ENCODE measurements at regions of chr4 and their contacts with region 1.

Region 1: GRCh38 chr4:154551872-154552686 is 1.9 kb upstream of the PLRG1 start:
- DNase-seq: peak; percentile 46
- H3K4me3 Mint-ChIP-seq: no peak overlapping the region
- H3K27ac Mint-ChIP-seq: no peak overlapping the region
- H3K4me1 Mint-ChIP-seq: peaks cover 20% of the 10 kb centered on the region
- H3K27me3 Mint-ChIP-seq: peaks cover under 1% of the 10 kb centered on the region

Region 2: DNA sequence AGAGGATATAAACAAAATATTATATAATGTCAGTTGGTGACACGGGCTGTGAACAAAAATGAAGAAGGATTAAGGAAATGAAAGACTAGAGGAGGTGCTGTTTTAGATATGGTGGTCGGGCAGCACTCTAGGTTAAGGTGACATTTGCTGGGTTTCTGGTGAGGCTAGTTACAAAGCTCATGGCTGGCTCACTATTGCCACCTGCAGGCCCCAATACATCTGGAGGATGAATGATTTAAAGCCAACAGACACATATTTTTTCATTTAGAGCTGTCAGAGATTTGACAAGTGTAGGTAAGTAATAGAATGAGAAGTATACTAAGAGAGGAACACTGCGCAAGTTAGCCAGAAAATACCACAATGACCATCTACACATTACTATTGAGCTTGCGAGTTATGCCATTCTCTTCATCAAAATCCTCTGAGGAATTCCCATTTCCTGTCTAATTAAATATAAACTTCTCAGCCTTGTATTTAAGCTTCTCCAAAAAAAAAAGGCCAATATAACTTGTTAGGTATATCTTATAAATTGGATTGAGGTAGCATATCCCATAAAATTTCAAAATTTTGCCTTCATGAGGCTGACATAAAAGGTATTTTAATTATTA is 66.7 kb after region 1 on chr4:
- intact Hi-C with region 1: loop called (anchors 1 kb)
- DNase-seq: peak; percentile 36
- H3K4me3 Mint-ChIP-seq: no peak overlapping the region
- H3K27ac Mint-ChIP-seq: no peak overlapping the region
- H3K4me1 Mint-ChIP-seq: peaks cover 8% of the 10 kb centered on the region
- H3K27me3 Mint-ChIP-seq: peaks cover 10% of the 10 kb centered on the region

Region 3: DNA sequence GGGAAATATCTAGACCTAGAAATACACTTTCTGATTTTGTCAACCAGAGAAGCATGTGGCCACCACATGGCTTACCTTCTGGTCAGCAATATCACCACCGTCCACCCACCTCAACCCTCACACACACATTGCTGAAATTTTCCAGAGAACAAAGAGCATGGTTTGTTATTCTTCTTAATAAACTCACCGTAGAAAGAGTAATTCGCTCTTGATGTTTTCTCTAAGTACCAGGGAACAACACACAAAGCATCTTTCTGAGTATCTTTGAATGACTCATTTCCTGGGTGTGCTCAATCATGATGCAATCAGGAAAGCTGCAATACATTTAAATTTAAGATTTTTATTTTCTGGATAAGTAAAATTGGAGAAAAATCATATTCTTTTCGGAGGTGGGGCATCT is 167.0 kb after region 1 on chr4:
- intact Hi-C with region 1: loop called (anchors 10 kb)
- DNase-seq: no peak
- H3K4me3 Mint-ChIP-seq: no peak overlapping the region
- H3K27ac Mint-ChIP-seq: no peak overlapping the region
- H3K4me1 Mint-ChIP-seq: peaks cover 15% of the 10 kb centered on the region
- H3K27me3 Mint-ChIP-seq: peaks cover 5% of the 10 kb centered on the region

Region 4: GRCh38 chr4:154779362-154779947 is 227.4 kb after region 1 on chr4:
- intact Hi-C with region 1: loop called (anchors 5 kb)
- DNase-seq: no peak
- H3K4me3 Mint-ChIP-seq: no peak overlapping the region
- H3K27ac Mint-ChIP-seq: no peak overlapping the region
- H3K4me1 Mint-ChIP-seq: no peaks in the 10 kb centered on the region
- H3K27me3 Mint-ChIP-seq: peaks cover 5% of the 10 kb centered on the region

Region 5: DNA sequence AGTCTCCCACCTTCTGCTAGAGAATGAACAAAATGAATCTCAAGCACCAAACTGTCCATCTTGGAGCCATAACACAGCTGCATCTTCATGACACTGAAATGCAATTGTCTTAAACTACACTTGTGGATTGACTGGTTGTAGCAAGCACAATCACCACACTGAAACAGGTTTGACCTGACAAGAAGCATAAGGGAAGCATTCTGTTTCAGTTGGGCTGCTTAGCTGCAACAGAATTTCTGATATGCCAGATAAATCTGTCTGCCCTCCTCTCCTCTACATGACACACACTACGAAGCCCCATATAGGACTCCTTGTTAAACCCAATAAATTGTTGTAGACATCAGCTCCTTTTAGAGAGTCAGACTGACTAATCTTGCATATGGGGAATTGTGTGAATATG is 554.5 kb after region 1 on chr4:
- intact Hi-C with region 1: no loop called
- DNase-seq: no peak
- H3K4me3 Mint-ChIP-seq: no peak overlapping the region
- H3K27ac Mint-ChIP-seq: no peak overlapping the region
- H3K4me1 Mint-ChIP-seq: no peaks in the 10 kb centered on the region
- H3K27me3 Mint-ChIP-seq: no peaks in the 10 kb centered on the region